Common myeloid progenitor, CD34-positive (primary cell): ENCODE measurements at regions of chr22 and their contacts with region 1.

Region 1: DNA sequence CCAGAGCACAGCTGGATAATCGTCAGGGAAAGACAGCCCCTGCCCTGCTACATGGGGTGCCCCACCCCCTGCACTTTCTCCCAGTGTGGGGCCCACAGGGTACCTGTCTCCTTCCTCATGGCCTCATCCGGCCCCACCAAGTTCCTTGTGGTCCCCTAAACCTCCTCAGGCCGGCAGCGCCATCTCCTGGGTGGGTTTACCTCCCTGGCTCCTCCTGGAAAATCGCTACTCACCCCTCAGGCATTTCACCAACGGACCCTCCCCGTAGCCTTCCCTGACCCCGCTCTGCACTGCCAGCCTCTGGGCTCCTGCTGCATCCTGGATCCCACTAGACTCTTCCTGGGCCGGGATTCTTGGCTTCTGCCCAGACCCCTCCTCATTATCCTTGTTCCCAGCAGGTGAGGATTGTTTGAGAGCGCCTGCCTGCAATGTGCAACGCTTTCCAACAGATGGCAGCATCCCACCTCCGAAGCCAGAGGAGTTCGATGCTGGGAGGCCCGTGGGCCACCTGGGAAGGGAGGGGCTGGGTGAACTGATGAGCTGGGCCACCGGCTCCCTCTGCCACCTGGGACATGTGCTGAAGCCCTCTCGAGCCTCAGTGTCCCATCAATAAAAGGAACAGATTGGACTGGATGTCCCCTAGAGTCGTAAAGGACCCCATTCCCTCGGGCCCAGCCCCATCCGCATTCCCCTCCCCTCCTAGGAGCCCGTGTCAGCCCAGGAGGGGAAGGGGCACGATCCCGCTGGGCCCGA is 44.2 kb upstream of the TTLL12 start:
- DNase-seq: peak; percentile 71 to 82 (median 80)
- H3K4me3 ChIP-seq: peak overlapping the region in 2 of 7 experiments; percentile 10 to 36
- H3K27ac ChIP-seq: no peak overlapping the region
- H3K4me1 ChIP-seq: peaks cover 0 to 21% (median 15%) of the 10 kb centered on the region in 4 experiments
- H3K27me3 ChIP-seq: peaks cover 0 to 2% (median 0%) of the 10 kb centered on the region in 5 experiments

Region 2: DNA sequence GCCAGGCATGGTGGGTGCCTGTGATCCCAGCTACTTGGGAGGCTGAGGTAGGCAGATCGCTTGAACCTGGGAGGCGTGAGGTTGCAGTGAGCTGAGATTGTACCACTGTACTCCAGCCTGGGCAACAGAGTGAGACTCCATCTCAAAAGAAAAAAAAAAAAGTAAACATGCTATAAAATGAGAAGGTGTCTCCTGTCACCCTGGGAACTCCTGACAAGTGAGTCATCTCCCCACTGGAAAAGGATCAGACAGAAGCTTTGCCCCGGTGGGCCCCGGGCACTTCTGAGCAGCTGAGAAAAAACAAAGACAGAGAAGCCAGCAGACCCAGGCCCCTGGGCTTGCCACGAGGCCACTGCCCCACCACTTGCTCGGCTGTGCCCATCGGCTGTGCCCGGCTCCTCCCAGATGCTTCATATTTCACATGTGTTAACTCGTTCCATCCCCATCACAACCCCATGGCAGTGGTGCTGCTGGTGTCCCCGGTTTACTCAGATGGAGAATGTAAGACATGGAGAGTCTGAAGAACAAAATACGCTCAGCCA is 164.2 kb before region 1 on chr22:
- CTCF ChIA-PET with region 1: no interaction called
- POLR2A ChIA-PET with region 1: no interaction called
- DNase-seq: no peak
- H3K4me3 ChIP-seq: no peak overlapping the region
- H3K27ac ChIP-seq: no peak overlapping the region
- H3K4me1 ChIP-seq: no peaks in the 10 kb centered on the region
- H3K27me3 ChIP-seq: no peaks in the 10 kb centered on the region

Region 3: GRCh38 chr22:43244402-43244801 is 13.3 kb after region 1 on chr22:
- CTCF ChIA-PET with region 1: interaction called, 54 read pairs
- POLR2A ChIA-PET with region 1: no interaction called
- DNase-seq: peak in 2 of 3 donors; percentile 39 to 66
- H3K4me3 ChIP-seq: no peak overlapping the region
- H3K27ac ChIP-seq: no peak overlapping the region
- H3K4me1 ChIP-seq: peaks cover 0 to 54% (median 23%) of the 10 kb centered on the region in 4 experiments
- H3K27me3 ChIP-seq: no peaks in the 10 kb centered on the region

Region 4: DNA sequence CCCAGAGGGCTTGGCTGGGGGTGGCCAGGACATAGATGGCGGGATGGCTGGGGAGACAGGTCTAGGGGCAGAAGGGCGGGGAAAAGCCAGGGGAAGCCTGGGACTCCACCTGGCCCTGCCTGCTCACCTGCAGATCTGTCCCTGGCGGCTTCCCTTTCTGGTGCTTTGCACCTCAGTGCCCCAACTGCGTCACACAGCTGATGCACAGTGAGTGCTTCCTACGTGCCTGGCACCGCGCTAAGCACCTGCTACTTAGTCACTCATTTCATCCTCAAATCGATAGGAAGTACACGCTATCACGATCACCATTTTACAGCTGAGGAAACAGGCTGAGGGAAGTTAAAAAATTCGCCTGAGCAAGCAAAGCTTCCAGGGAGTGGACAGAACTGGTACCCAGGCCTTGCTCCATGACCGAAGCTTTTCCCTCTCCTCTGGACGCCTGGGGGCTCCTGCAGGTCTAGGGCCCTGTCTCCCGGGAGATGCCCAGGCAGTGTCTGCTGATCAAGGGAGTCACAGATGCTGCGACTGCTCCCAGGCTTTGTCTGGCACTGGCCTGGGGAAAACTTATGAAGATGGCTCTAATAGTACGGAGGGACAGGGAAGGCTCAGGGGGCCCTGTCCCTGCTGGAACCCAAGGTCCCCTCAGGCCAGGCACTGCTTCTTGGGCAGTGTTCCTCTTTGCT is 18.8 kb after region 1 on chr22:
- CTCF ChIA-PET with region 1: interaction called, 54 read pairs
- POLR2A ChIA-PET with region 1: no interaction called
- DNase-seq: no peak
- H3K4me3 ChIP-seq: no peak overlapping the region
- H3K27ac ChIP-seq: no peak overlapping the region
- H3K4me1 ChIP-seq: peaks cover 0 to 45% (median 20%) of the 10 kb centered on the region in 4 experiments
- H3K27me3 ChIP-seq: no peaks in the 10 kb centered on the region

Region 5: DNA sequence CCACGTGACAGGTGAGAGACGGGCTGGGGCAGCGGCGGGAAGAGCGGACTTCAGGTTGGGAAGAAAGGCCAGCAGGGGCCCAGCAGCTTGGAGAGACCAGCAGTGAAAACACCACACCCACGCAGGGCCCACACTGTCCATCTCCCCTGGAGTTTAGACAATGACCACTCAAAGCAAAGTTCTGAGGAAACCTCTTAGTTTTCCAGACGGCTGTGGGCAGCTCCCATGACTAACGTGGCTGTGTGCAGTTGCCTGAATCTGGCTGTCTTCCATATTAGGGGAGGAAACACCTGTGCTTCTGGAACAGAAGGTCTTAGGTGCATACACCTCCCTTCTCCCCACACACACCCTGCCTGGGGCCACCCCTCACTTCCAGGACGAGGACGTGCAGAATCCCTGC is 26.4 kb after region 1 on chr22:
- CTCF ChIA-PET with region 1: interaction called, 72 read pairs
- POLR2A ChIA-PET with region 1: interaction called, 15 read pairs
- DNase-seq: peak; percentile 83 to 97 (median 95)
- H3K4me3 ChIP-seq: peak overlapping the region in 4 of 7 experiments; percentile 16 to 38 (median 32)
- H3K27ac ChIP-seq: peak overlapping the region; percentile 81 to 87
- H3K4me1 ChIP-seq: peaks cover 8 to 74% (median 50%) of the 10 kb centered on the region in 4 experiments
- H3K27me3 ChIP-seq: no peaks in the 10 kb centered on the region

Region 6: DNA sequence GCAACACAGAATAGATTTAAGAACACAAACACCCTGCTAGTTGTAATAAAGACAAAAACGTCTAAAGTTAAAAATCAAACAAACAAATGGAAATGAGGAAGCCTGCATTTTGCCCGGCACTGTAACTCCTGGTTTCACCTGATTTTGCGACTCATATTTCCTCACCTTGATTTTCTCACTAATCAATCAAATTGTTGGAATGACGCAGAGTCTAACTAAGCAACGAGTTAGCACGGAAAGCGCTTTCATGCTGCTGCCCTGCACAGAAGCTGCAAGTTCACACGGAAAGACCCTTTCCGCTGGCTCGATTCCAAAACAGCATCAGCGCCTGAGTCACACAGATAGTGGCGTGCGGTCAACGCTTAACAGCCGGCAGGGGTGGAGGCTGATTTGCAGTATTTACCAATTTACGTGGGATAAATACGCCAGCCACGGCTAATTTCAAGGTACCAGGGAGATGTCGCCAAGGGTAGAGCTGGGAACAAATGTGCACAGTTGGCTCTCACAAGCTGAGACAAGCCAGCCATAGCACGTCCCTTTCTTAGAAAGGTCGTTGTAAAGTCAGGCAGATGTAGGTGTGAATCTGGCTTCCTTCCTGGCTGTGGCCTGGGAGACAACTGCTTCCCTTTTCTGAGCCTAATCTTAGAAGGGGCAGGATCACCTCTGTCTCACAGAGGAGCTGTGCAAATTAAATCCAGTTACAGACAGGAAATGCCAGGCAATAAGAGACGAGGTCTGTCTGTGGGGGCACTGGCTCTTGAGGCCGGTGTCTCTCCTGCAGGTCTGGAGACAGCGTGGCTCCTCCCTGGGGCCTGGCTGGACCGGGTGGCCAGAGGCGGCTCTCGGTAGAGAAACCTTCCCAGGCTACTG is 32.7 kb after region 1 on chr22:
- CTCF ChIA-PET with region 1: interaction called, 119 read pairs
- POLR2A ChIA-PET with region 1: interaction called, 15 read pairs
- DNase-seq: peak; percentile 99
- H3K4me3 ChIP-seq: peak overlapping the region in 5 of 7 experiments; percentile 21 to 61 (median 50)
- H3K27ac ChIP-seq: peak overlapping the region; percentile 95
- H3K4me1 ChIP-seq: peaks cover 13 to 86% (median 62%) of the 10 kb centered on the region in 4 experiments
- H3K27me3 ChIP-seq: no peaks in the 10 kb centered on the region

Region 7: DNA sequence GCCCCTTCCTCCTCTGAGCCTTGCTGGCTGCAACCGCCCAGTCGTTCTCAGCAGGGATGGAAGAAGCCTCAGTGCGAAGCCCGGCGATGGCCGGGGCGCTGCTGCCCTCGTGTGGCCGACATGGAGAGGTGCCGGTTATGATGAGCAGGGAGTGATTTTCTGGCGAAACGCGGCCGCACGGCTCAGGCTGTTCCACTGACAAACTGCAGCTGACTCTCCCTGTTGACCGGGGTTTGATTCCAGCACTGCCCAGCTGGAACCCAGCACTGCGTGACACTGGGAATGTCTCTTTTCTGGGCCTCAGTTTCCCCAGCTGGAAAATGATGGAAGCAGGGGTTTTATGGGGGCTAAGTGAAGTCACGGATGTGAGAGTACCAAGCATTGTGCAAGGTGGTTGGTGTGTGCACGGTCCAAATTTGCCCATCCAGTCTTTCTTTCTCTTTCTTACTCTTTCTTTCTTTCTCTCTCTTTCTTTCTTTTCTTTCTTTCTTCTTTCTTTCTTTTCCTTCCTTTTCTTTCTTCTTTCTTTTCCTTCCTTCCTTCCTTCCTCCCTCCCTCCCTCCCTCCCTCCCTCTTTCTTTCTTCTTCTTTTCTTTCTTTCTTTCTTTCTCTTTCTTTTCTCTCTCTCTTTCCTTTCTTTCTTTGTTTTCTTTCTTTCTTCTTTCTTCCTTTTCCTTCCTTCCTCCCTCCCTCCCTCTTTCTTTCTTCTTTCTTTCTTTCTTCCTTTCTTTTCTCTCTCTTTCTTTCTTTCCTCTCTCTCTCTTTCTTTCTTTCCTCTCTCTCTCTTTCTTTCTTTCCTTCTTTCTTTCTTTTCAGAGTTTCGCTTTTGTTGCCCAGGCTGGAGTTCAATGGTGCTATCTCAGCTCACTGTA is 154.9 kb after region 1 on chr22:
- CTCF ChIA-PET with region 1: interaction called, 55 read pairs
- POLR2A ChIA-PET with region 1: no interaction called
- DNase-seq: peak; percentile 74 to 87 (median 86)
- H3K4me3 ChIP-seq: peak overlapping the region in 2 of 7 experiments; percentile 11 to 45
- H3K27ac ChIP-seq: no peak overlapping the region
- H3K4me1 ChIP-seq: peaks cover 0 to 24% (median 19%) of the 10 kb centered on the region in 4 experiments
- H3K27me3 ChIP-seq: peaks cover 0 to 5% (median 0%) of the 10 kb centered on the region in 5 experiments